Right ventricle myocardium inferior (tissue), 1 donor: ENCODE measurements at regions of chr22 and their contacts with region 1.

Region 1: GRCh38 chr22:41697126-41697775 is 2.1 kb upstream of the MEI1 start:
- DNase-seq: peak; percentile 96
- ATAC-seq: peak; percentile 74

Region 2: GRCh38 chr22:41557401-41558240 is 139.6 kb before region 1 on chr22:
- intact Hi-C with region 1: no loop called
- DNase-seq: peak; percentile 88
- ATAC-seq: peak; percentile 42

Region 3: GRCh38 chr22:41742916-41743315 is 45.7 kb after region 1 on chr22:
- intact Hi-C with region 1: no loop called
- DNase-seq: no peak
- ATAC-seq: no peak

Region 4: GRCh38 chr22:41800348-41801146 is 103.3 kb after region 1 on chr22 and contains the start of gene CCDC134:
- intact Hi-C with region 1: loop called (anchors 5 kb)
- DNase-seq: peak; percentile 96
- ATAC-seq: peak; percentile 99
- total RNA-seq, gene CCDC134: 4.1 TPM

Region 5: DNA sequence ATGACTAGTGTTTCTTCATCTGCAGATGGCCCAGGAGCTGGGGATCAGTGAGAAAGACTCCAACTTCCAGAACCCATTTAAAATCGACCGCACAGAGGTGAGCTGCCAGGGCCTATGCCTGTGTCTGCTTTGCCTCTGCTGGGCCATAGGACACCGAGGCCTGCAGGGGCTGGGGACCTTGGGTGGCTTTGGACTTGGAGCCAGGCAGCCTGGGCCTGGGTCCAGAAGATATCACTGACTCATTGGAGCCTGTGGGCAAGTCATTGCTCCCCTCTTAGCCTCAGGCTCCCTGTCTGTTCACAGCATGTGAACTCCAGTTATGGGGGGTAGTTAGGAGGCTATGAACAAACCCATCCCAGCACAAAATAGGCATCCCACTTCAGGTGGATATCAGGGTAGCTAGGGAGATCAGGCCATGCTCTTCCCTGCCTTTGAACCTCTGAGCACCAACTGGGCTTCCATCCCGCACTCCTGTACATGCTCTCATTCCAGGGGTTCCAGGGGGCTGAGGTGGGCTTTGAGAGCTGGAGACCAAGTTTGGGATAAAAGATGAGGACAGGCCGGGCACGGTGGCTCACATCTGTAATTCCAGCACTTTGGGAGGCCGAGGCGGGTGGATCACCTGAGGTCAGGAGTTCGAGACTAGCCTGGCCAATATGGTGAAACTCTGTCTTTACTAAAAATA is 116.6 kb after region 1 on chr22:
- intact Hi-C with region 1: no loop called
- DNase-seq: no peak
- ATAC-seq: no peak

Region 6: DNA sequence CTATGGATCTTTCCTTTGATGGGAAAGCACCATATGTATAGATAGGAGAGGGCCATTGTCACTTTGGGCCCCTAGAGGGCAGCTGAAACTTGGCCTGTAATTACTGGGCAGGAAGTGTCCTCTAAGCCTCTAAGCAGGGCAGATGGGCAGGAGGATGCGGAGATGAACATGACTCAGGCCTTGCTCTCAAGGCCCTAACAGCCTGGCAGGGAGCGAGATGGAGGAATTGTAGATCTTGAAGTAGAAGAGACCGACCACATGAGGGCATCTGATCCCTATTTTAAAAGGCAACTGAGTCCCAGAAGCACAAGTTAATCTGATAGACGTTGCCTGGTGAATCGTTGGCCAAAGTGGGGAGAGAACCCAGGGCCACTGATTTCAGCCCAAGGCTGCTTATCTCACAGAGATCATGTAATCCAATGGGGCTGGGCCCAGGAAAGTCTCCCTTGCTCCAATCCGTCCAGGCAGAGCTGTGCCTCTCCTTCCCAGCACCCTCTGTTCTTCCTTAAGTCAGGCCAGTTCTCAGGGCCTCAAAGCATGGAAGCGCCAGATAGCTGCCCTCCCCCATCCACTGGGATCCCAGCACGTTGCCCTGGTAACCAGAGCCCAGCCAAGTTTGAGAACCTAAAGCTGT is 269.5 kb after region 1 on chr22:
- intact Hi-C with region 1: no loop called
- DNase-seq: no peak
- ATAC-seq: peak; percentile 26